ENCODE measurements at regions of chr4 and their contacts with region 1.

Region 1: DNA sequence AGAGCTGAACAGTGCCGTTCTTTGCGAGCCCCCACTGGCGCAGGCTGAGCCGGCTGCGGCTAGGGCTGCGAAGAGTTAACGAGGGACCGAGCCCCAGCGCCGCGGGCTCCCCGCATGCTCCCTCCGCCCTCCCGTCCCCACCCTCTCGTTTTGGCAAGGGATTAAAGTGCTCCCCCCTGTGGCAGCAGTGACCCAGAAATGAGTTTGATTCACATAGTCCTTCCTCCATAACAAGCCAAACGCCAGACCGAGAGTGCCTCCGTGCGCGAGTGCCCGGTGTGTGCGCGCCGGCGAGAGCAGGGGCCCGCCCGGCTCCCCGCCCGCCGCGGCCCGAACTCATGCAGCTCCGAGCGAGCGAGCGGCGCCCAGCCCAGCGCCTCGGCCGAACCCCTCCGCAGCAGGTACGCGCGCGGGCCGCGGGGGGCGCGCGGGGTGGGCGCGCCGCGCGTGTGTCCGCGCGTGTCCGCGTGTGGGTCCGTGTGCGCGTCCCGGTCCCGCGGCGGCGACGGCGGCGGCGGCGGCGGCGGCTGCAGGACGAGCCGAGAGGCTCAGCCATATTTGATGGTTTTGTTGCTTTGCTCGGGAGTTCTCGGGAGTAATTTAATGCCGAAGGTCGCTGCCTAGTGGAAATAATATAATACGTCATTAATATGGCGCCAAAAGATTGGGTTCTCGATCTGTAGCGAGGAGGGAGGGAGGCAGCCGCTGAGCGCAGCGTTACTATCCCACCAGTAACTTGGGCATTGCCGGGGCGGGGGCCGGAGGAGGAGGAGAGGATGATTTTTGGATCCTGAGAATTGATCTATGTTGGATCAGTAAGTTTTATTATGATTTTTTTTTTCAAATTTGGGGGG is at the start of gene JADE1:
- DNase-seq: peak; percentile 82 to 95 (median 89)
- ATAC-seq: peak; percentile 58
- H3K4me3 ChIP-seq: peak within 1 kb of the TSS; percentile 80
- H3K4me3 Mint-ChIP-seq: peak within 1 kb of the TSS; percentile 97
- H3K27ac ChIP-seq: peak within 1 kb of the TSS; percentile 50 to 91
- H3K27ac Mint-ChIP-seq: peak within 1 kb of the TSS; percentile 93
- H3K4me1 ChIP-seq: peaks cover 9% of the 10 kb centered on the region
- H3K4me1 Mint-ChIP-seq: peaks cover 17% of the 10 kb centered on the region
- H3K27me3 ChIP-seq: no peaks in the 10 kb centered on the region
- H3K27me3 Mint-ChIP-seq: no peaks in the 10 kb centered on the region
- CTCF ChIP-seq: peak; percentile 44
- total RNA-seq, gene JADE1: 57.1 to 58.4 TPM

Region 2: DNA sequence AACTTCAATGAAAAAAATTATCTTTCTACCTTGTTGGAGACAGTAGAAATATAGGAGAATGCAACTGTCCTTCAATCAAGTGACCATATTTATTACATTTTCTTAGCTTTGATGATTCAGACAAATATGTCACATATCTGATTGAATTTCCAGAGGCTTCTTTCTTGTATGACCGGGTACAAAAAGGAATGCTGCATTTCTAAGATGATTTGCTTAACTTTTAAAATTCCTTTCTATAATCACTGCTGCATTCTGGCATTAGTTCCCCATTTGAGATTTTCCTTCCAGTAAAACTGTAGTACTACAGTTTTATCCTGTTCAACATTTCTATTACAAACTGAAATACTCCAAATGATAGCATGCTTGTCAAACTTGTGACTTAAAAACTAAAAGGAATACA is 849.9 kb before region 1 on chr4:
- CTCF ChIA-PET with region 1: no interaction called
- POLR2A ChIA-PET with region 1: interaction called, 19 read pairs
- intact Hi-C with region 1: loop called (anchors 5 to 10 kb)
- DNase-seq: no peak
- ATAC-seq: no peak
- H3K4me3 ChIP-seq: no peak overlapping the region
- H3K4me3 Mint-ChIP-seq: no peak overlapping the region
- H3K27ac ChIP-seq: no peak overlapping the region
- H3K27ac Mint-ChIP-seq: no peak overlapping the region
- H3K4me1 ChIP-seq: peaks cover 15% of the 10 kb centered on the region
- H3K4me1 Mint-ChIP-seq: peaks cover 48% of the 10 kb centered on the region
- H3K27me3 ChIP-seq: no peaks in the 10 kb centered on the region
- H3K27me3 Mint-ChIP-seq: no peaks in the 10 kb centered on the region
- CTCF ChIP-seq: no peak

Region 3: GRCh38 chr4:128060699-128061565 is 748.8 kb before region 1 on chr4 and contains the start of gene LARP1B:
- CTCF ChIA-PET with region 1: no interaction called
- POLR2A ChIA-PET with region 1: interaction called, 8 read pairs
- intact Hi-C with region 1: loop called in 1 of 2 experiments (anchors 2 kb)
- DNase-seq: peak; percentile 81 to 96 (median 90)
- ATAC-seq: peak; percentile 89
- H3K4me3 ChIP-seq: peak within 1 kb of the TSS; percentile 64
- H3K4me3 Mint-ChIP-seq: peak within 1 kb of the TSS; percentile 93
- H3K27ac ChIP-seq: peak within 1 kb of the TSS; percentile 60 to 70
- H3K27ac Mint-ChIP-seq: peak within 1 kb of the TSS; percentile 89
- H3K4me1 ChIP-seq: peaks cover 23% of the 10 kb centered on the region
- H3K4me1 Mint-ChIP-seq: peaks cover 6% of the 10 kb centered on the region
- H3K27me3 ChIP-seq: no peaks in the 10 kb centered on the region
- H3K27me3 Mint-ChIP-seq: no peaks in the 10 kb centered on the region
- CTCF ChIP-seq: no peak
- total RNA-seq, gene LARP1B: 8.4 to 8.9 TPM

Region 4: DNA sequence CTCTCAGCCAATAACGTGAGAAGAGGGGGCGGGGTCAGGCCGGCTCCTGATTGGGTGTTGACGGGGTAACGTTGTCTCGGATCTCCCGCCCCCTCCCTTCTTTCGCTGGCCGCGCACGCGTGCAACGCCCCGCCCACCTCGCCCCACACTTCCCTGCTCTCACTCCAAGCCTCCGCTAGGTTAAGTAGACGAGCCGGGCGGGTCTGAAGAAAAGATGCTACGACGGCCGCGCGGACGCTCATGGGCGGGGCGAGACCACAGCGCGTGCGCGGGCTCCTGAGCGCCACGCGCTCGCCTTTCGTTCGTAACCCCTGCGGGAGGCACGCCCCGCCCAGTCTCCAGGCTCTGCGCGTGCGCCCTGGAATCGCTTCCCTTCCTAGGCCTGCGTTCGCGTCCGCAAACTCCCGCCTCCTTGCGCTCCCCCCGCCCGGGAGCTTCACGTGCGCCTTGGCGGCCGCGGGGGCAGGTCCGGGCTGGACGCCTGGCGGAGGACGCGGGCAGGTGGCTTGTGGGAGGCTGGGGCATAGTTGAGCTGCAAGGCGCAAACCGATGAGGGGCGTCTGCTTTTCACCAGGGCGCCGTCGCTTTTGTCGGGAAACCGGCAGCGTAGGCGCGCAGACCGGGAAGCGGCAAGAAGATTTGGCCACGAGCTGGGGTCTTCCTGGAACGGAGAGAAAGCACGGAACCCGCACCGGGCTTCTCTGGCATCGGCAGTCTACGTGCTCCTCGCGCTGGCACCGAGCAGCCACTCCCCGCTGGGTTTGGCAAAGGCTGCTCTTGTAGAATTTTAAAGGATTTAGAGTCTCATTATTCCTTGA is 521.6 kb before region 1 on chr4:
- CTCF ChIA-PET with region 1: interaction called, 3 read pairs
- POLR2A ChIA-PET with region 1: interaction called, 12 read pairs
- intact Hi-C with region 1: loop called (anchors 1 to 5 kb)
- DNase-seq: peak; percentile 99 to 100 (median 100)
- ATAC-seq: peak; percentile 76
- H3K4me3 ChIP-seq: peak overlapping the region; percentile 69
- H3K4me3 Mint-ChIP-seq: peak overlapping the region; percentile 90
- H3K27ac ChIP-seq: peak overlapping the region; percentile 90 to 98
- H3K27ac Mint-ChIP-seq: peak overlapping the region; percentile 91
- H3K4me1 ChIP-seq: peaks cover 25% of the 10 kb centered on the region
- H3K4me1 Mint-ChIP-seq: peaks cover 43% of the 10 kb centered on the region
- H3K27me3 ChIP-seq: no peaks in the 10 kb centered on the region
- H3K27me3 Mint-ChIP-seq: no peaks in the 10 kb centered on the region
- CTCF ChIP-seq: no peak

Region 5: DNA sequence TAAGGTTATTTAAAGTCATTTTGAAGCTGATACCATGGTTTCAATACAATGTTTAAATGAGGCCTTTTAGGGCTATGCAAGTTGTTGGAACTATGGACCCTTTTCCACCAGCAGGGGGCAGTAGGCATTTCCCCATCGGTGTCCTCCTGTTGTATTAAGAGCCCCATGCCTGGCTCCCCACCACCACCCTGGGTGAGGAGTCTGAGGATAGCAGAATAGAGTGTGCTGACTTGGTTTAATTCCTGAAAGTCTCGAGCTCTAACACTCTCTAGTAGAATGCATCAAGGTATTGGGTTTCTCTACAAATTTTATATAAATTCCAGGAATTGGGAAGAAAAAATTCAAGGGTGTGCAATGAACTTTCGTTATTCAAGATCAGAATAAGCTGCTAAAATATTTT is 235.0 kb before region 1 on chr4:
- CTCF ChIA-PET with region 1: no interaction called
- POLR2A ChIA-PET with region 1: interaction called, 3 read pairs
- intact Hi-C with region 1: loop called (anchors 1 to 10 kb)
- DNase-seq: peak; percentile 25 to 74 (median 50)
- ATAC-seq: peak; percentile 56
- H3K4me3 ChIP-seq: no peak overlapping the region
- H3K4me3 Mint-ChIP-seq: no peak overlapping the region
- H3K27ac ChIP-seq: no peak overlapping the region
- H3K27ac Mint-ChIP-seq: no peak overlapping the region
- H3K4me1 ChIP-seq: no peaks in the 10 kb centered on the region
- H3K4me1 Mint-ChIP-seq: no peaks in the 10 kb centered on the region
- H3K27me3 ChIP-seq: peaks cover 0 to 3% of the 10 kb centered on the region in 2 experiments
- H3K27me3 Mint-ChIP-seq: peaks cover 16% of the 10 kb centered on the region
- CTCF ChIP-seq: peak; percentile 51

Region 6: GRCh38 chr4:128854433-128854832 is 44.7 kb after region 1 on chr4:
- CTCF ChIA-PET with region 1: no interaction called
- POLR2A ChIA-PET with region 1: interaction called, 16 read pairs
- intact Hi-C with region 1: loop called in 1 of 2 experiments (anchors 2 kb)
- DNase-seq: peak in 4 of 14 experiments; percentile 16 to 76 (median 54)
- ATAC-seq: peak; percentile 91
- H3K4me3 ChIP-seq: no peak overlapping the region
- H3K4me3 Mint-ChIP-seq: peak overlapping the region; percentile 17
- H3K27ac ChIP-seq: peak overlapping the region; percentile 10 to 65
- H3K27ac Mint-ChIP-seq: peak overlapping the region; percentile 72
- H3K4me1 ChIP-seq: peaks cover 15% of the 10 kb centered on the region
- H3K4me1 Mint-ChIP-seq: peaks cover 43% of the 10 kb centered on the region
- H3K27me3 ChIP-seq: no peaks in the 10 kb centered on the region
- H3K27me3 Mint-ChIP-seq: no peaks in the 10 kb centered on the region
- CTCF ChIP-seq: no peak

Region 7: DNA sequence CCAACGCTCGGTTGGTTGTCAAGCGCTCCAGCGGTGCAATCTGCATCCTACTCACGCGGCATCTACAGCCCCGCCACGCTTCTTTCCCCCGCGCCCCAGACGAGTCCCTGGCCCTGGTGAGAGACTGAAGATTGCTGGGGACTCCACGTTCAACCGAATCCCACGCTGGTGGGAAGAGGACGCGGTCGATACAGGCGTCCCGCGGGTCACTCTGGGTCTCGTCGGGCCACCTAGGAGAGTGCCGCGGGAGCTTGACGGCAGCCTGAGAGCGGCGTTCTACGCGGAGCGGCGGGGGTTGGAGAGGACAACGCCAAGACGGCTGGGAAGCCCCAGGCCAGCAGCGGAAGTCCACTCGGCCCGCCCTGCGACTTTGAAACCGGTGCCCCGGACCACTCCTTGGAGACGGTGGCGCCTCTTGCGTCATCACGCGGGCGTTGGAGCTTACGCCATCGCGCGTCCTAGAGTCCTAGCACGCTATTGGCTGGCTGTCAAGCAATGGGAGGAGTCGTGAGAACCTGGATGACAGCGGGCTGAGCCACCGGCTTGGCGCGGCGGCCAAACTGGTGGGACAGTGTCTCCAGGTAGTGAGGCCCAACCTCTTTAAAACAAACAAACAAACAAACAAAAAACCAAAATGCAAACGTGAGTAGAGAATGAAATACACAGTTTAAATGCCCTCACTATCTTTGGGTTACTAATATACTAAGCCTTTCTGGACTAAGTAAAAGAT is 283.7 kb after region 1 on chr4 and contains the start of gene SCLT1:
- CTCF ChIA-PET with region 1: no interaction called
- POLR2A ChIA-PET with region 1: interaction called, 17 read pairs
- intact Hi-C with region 1: loop called in 1 of 2 experiments (anchors 5 kb)
- DNase-seq: peak; percentile 87 to 98 (median 93)
- ATAC-seq: peak; percentile 90
- H3K4me3 ChIP-seq: peak within 1 kb of the TSS; percentile 88
- H3K4me3 Mint-ChIP-seq: no peak within 1 kb of the TSS
- H3K27ac ChIP-seq: peak within 1 kb of the TSS; percentile 92 to 97
- H3K27ac Mint-ChIP-seq: no peak within 1 kb of the TSS
- H3K4me1 ChIP-seq: peaks cover 16% of the 10 kb centered on the region
- H3K4me1 Mint-ChIP-seq: peaks cover 45% of the 10 kb centered on the region
- H3K27me3 ChIP-seq: no peaks in the 10 kb centered on the region
- H3K27me3 Mint-ChIP-seq: no peaks in the 10 kb centered on the region
- CTCF ChIP-seq: no peak
- total RNA-seq, gene SCLT1: 21.8 to 21.9 TPM

Region 8: DNA sequence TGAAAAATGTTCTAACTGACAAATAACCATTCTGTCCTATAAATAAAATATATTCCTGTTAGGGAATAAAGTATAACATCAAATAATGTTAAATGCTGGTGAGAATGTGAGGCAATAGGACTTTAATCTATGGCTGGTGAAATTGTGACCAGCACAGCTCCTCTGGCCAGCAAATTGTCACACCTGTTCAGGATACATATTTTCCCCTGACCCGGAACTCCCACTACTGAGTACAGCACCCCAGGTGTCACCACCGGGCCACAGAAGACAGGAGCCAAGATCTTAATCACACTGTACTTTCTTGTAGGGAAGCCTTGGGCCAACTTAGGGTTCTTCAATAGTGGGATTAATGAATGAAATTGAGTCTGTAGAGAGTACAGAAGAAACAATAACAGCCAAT is 319.4 kb after region 1 on chr4:
- CTCF ChIA-PET with region 1: no interaction called
- POLR2A ChIA-PET with region 1: no interaction called
- intact Hi-C with region 1: no loop called
- DNase-seq: no peak
- ATAC-seq: no peak
- H3K4me3 ChIP-seq: no peak overlapping the region
- H3K4me3 Mint-ChIP-seq: no peak overlapping the region
- H3K27ac ChIP-seq: no peak overlapping the region
- H3K27ac Mint-ChIP-seq: no peak overlapping the region
- H3K4me1 ChIP-seq: no peaks in the 10 kb centered on the region
- H3K4me1 Mint-ChIP-seq: no peaks in the 10 kb centered on the region
- H3K27me3 ChIP-seq: no peaks in the 10 kb centered on the region
- H3K27me3 Mint-ChIP-seq: no peaks in the 10 kb centered on the region
- CTCF ChIP-seq: no peak